ENCODE measurements at regions of chr5 and their contacts with region 1.

Region 1: GRCh38 chr5:71719063-71719964 is at the start of gene CARTPT:
- DNase-seq: peak in 3 of 4 experiments; percentile 12 to 22 (median 20)
- ATAC-seq: peak; percentile 80
- H3K4me3 ChIP-seq: no peak within 1 kb of the TSS
- H3K27ac ChIP-seq: no peak within 1 kb of the TSS
- H3K4me1 ChIP-seq: peaks cover 0 to 9% of the 10 kb centered on the region in 2 experiments; a peak in 1 of 5 replicates
- H3K27me3 ChIP-seq: peaks cover 7 to 16% of the 10 kb centered on the region in 2 experiments; a peak in 4 of 5 replicates
- CTCF ChIP-seq: no peak
- EP300 ChIP-seq: no peak
- POLR2A ChIP-seq: no peak
- RAD21 ChIP-seq: no peak
- polyA plus RNA-seq, gene CARTPT: not detected

Region 2: DNA sequence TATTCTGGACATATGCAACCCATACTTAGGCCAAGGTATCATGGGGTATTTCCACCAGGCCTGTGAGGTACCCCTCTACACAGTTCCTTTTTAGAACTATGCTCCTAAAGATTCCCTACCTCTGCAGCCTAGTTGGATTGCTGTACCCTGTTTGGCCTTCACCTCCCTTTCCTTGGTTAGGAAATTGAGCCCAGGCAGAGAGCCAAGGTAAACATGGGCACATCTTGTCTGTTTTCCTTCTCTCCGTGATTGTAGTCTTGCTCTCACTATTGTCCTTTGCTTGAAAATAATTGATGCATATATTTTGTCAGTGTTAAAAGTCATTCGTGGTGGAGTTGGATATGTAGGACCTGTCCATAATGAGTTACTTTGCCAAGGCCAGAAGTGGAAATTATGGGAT is 237.2 kb before region 1 on chr5:
- CTCF ChIA-PET with region 1: no interaction called
- POLR2A ChIA-PET with region 1: no interaction called
- in situ Hi-C with region 1: no loop called
- intact Hi-C with region 1: no loop called
- DNase-seq: no peak
- ATAC-seq: no peak
- H3K4me3 ChIP-seq: no peak overlapping the region
- H3K27ac ChIP-seq: no peak overlapping the region
- H3K4me1 ChIP-seq: no peaks in the 10 kb centered on the region
- H3K27me3 ChIP-seq: no peaks in the 10 kb centered on the region
- CTCF ChIP-seq: no peak
- EP300 ChIP-seq: no peak
- POLR2A ChIP-seq: no peak
- RAD21 ChIP-seq: no peak

Region 3: GRCh38 chr5:71744009-71744790 is 24.9 kb after region 1 on chr5:
- CTCF ChIA-PET with region 1: no interaction called
- POLR2A ChIA-PET with region 1: no interaction called
- in situ Hi-C with region 1: no loop called
- intact Hi-C with region 1: loop called (anchors 1 kb)
- DNase-seq: no peak
- ATAC-seq: no peak
- H3K4me3 ChIP-seq: no peak overlapping the region
- H3K27ac ChIP-seq: no peak overlapping the region
- H3K4me1 ChIP-seq: no peaks in the 10 kb centered on the region
- H3K27me3 ChIP-seq: peaks cover 0 to 5% of the 10 kb centered on the region in 2 experiments; a peak in 1 of 5 replicates
- CTCF ChIP-seq: no peak
- EP300 ChIP-seq: no peak
- POLR2A ChIP-seq: no peak
- RAD21 ChIP-seq: no peak